Aorta (tissue), 5 donors: ENCODE measurements at regions of chr13 and their contacts with region 1.

Region 1: GRCh38 chr13:97280478-97280877 is 58.3 kb downstream of the MBNL2 start:
- DNase-seq: no peak
- ATAC-seq: no peak
- H3K4me3 ChIP-seq: no peak overlapping the region
- H3K27ac ChIP-seq: peak overlapping the region in 1 of 2 donors; percentile 79
- H3K4me1 ChIP-seq: peaks cover 7 to 10% of the 10 kb centered on the region in 2 donors
- H3K27me3 ChIP-seq: no peaks in the 10 kb centered on the region

Region 2: GRCh38 chr13:97333983-97334382 is 53.5 kb after region 1 on chr13:
- intact Hi-C with region 1: loop called (anchors 5 to 10 kb)
- DNase-seq: no peak
- ATAC-seq: no peak
- H3K4me3 ChIP-seq: no peak overlapping the region
- H3K27ac ChIP-seq: no peak overlapping the region
- H3K4me1 ChIP-seq: peaks cover 3 to 6% of the 10 kb centered on the region in 2 donors
- H3K27me3 ChIP-seq: no peaks in the 10 kb centered on the region

Region 3: GRCh38 chr13:97339019-97339987 is 58.8 kb after region 1 on chr13:
- intact Hi-C with region 1: loop called (anchors 5 to 10 kb)
- DNase-seq: peak; percentile 68 to 74
- ATAC-seq: peak; percentile 76
- H3K4me3 ChIP-seq: no peak overlapping the region
- H3K27ac ChIP-seq: peak overlapping the region in 1 of 2 donors; percentile 93
- H3K4me1 ChIP-seq: peaks cover 5 to 6% of the 10 kb centered on the region in 2 donors
- H3K27me3 ChIP-seq: no peaks in the 10 kb centered on the region

Region 4: GRCh38 chr13:97353927-97354675 is 73.6 kb after region 1 on chr13:
- intact Hi-C with region 1: no loop called
- DNase-seq: no peak
- ATAC-seq: no peak
- H3K4me3 ChIP-seq: no peak overlapping the region
- H3K27ac ChIP-seq: no peak overlapping the region
- H3K4me1 ChIP-seq: peaks cover 0 to 3% of the 10 kb centered on the region in 2 donors
- H3K27me3 ChIP-seq: no peaks in the 10 kb centered on the region

Region 5: DNA sequence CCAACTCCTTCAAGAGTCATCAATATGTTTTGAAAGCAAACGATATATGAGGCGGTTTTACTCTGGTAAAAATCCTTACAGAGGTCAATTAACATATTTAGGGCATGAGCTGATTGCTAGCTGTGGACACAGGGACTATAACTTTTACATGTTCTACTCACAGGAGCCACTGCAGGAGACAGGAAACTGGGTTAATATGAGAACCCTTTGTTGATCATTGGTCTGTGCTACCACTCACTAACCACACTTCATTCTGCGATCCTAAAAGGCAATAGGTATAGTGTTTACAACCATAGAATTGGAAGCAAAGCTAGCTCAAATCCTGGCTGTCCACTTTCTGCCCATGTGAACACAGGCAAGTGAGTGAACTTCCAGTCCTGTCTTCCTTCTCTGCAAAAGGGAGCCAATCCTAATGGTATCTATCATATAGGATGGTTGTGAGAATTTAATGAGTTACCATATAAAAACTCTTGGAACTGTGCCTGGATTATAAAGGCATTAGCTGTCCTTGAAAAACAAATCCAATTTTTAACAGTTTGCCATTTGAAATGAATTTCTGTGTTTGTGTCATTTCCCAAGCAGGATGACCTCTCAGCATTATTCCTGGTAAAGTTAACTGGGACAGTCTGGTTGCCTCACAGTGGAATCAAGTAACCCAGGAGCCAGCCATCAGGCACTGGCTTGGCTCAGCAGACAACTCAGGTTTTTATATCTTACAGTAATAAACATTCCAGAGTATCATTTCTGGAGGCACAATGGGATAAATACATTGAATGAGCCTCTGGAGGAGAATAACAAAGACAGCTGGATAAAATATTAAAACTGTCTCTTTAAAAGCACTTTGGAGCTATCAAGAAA is 123.6 kb after region 1 on chr13:
- intact Hi-C with region 1: no loop called
- DNase-seq: no peak
- ATAC-seq: no peak
- H3K4me3 ChIP-seq: no peak overlapping the region
- H3K27ac ChIP-seq: no peak overlapping the region
- H3K4me1 ChIP-seq: no peaks in the 10 kb centered on the region
- H3K27me3 ChIP-seq: no peaks in the 10 kb centered on the region

Region 6: DNA sequence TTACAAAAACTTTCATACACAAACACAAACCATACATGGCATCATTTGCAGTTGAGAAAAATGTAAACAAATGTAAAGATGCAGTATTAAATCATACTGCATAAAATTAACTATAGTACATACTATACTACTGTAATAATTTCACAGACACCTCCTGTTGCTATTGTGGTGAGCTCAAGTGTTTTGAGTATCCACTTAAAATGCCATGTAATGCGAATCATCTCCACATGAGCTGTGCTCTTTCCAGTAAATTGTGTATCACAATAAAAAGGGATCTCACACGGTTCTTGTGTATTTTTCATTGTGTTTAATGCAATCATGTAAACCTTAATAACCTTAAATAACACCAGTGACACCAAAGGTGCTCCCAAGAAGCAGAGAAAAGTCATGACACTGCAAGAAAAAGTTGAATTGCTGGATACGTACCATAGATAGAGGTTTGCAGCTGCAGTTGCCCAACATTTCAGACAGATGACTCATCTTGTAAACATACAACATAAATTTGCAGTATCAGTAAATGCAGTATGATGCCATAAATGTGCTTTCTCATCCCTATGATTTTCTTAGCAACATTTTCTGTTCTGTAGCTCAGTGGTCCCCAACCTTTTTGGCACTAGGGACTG is 320.1 kb after region 1 on chr13:
- intact Hi-C with region 1: no loop called
- DNase-seq: no peak
- ATAC-seq: no peak
- H3K4me3 ChIP-seq: no peak overlapping the region
- H3K27ac ChIP-seq: no peak overlapping the region
- H3K4me1 ChIP-seq: no peaks in the 10 kb centered on the region
- H3K27me3 ChIP-seq: no peaks in the 10 kb centered on the region